BJ (cell line): ENCODE measurements at regions of chr1 and their contacts with region 1.

Region 1: GRCh38 chr1:153958111-153958960 is at the start of gene CRTC2:
- DNase-seq: peak; percentile 95
- H3K4me3 ChIP-seq: peak within 1 kb of the TSS; percentile 96
- H3K27me3 ChIP-seq: no peaks in the 10 kb centered on the region
- CTCF ChIP-seq: 0 out of 2 replicates have a peak, but pooled peaks have one; percentile 7
- polyA plus RNA-seq, gene CRTC2: 17.7 and 25.2 TPM in 2 replicates

Region 2: DNA sequence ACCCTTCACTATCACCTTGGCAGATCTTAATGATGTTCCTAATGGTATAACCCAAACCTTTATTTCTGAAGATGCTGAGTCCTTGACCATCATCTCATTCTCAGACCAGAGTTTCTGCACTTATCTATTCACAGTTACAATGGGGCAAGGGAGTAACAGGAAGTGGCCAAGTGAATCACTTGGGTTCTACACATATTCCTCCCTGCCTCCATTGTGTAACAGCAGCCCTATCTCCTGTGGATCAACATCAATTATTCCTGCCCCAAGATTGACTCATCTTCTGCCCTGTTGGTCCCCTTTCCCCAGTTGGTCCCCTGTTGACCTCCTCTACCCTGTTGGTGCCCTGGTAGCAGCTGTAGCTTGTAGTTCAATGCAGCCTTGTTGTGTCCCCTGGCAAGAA is 487.6 kb before region 1 on chr1:
- CTCF ChIA-PET with region 1: no interaction called
- POLR2A ChIA-PET with region 1: no interaction called
- DNase-seq: no peak
- H3K4me3 ChIP-seq: no peak overlapping the region
- H3K27me3 ChIP-seq: no peaks in the 10 kb centered on the region
- CTCF ChIP-seq: no peak

Region 3: DNA sequence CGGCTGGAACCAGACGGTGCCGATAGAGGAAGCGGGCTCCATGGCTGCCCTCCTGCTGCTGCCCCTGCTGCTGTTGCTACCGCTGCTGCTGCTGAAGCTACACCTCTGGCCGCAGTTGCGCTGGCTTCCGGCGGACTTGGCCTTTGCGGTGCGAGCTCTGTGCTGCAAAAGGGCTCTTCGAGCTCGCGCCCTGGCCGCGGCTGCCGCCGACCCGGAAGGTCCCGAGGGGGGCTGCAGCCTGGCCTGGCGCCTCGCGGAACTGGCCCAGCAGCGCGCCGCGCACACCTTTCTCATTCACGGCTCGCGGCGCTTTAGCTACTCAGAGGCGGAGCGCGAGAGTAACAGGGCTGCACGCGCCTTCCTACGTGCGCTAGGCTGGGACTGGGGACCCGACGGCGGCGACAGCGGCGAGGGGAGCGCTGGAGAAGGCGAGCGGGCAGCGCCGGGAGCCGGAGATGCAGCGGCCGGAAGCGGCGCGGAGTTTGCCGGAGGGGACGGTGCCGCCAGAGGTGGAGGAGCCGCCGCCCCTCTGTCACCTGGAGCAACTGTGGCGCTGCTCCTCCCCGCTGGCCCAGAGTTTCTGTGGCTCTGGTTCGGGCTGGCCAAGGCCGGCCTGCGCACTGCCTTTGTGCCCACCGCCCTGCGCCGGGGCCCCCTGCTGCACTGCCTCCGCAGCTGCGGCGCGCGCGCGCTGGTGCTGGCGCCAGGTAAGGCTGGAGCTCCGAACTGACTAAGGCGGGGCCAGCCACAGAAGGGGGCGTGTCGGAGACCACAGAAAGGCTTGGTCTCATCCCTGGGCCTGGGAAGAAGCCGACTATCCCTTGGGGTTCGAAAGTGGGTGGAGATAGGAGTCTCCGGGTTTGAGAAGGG is 182.6 kb before region 1 on chr1:
- CTCF ChIA-PET with region 1: no interaction called
- POLR2A ChIA-PET with region 1: interaction called, 21 read pairs
- DNase-seq: no peak
- H3K4me3 ChIP-seq: peak overlapping the region; percentile 62
- H3K27me3 ChIP-seq: no peaks in the 10 kb centered on the region
- CTCF ChIP-seq: no peak

Region 4: GRCh38 chr1:153881751-153882150 is 76.6 kb before region 1 on chr1:
- CTCF ChIA-PET with region 1: no interaction called
- POLR2A ChIA-PET with region 1: no interaction called
- DNase-seq: no peak
- H3K4me3 ChIP-seq: peak overlapping the region; percentile 13; the same call in 1 of the 2 replicates
- H3K27me3 ChIP-seq: no peaks in the 10 kb centered on the region
- CTCF ChIP-seq: no peak

Region 5: GRCh38 chr1:154081386-154082126 is 123.2 kb after region 1 on chr1:
- CTCF ChIA-PET with region 1: no interaction called
- POLR2A ChIA-PET with region 1: no interaction called
- DNase-seq: no peak
- H3K4me3 ChIP-seq: no peak overlapping the region
- H3K27me3 ChIP-seq: no peaks in the 10 kb centered on the region
- CTCF ChIP-seq: no peak